A549 (cell line): ENCODE measurements at regions of chr16 and their contacts with region 1.

Region 1: GRCh38 chr16:2251483-2252240 is at the start of gene ECI1:
- DNase-seq: peak; percentile 96 to 98
- ATAC-seq: peak; percentile 83 to 88
- H3K4me3 ChIP-seq: peak within 1 kb of the TSS; percentile 91
- H3K27ac ChIP-seq: peak within 1 kb of the TSS; percentile 96 to 98
- H3K4me1 ChIP-seq: peaks cover 20% of the 10 kb centered on the region
- CTCF ChIP-seq: peak; percentile 56
- EP300 ChIP-seq: no peak
- POLR2A ChIP-seq: peak; percentile 88
- RAD21 ChIP-seq: peak; percentile 43 to 70
- polyA plus RNA-seq, gene ECI1: 41.8 and 47.9 TPM in 2 replicates

Region 2: GRCh38 chr16:1942810-1943726 is 308.6 kb before region 1 on chr16 and contains the start of gene MSRB1:
- CTCF ChIA-PET with region 1: no interaction called
- POLR2A ChIA-PET with region 1: no interaction called
- DNase-seq: peak; percentile 97 to 98
- ATAC-seq: peak; percentile 84 to 93
- H3K4me3 ChIP-seq: peak within 1 kb of the TSS; percentile 84
- H3K27ac ChIP-seq: peak within 1 kb of the TSS; percentile 79 to 92
- H3K4me1 ChIP-seq: peaks cover 19% of the 10 kb centered on the region
- CTCF ChIP-seq: no peak
- EP300 ChIP-seq: no peak
- POLR2A ChIP-seq: peak; percentile 90
- RAD21 ChIP-seq: no peak
- polyA plus RNA-seq, gene MSRB1: 27.7 and 34.4 TPM in 2 replicates

Region 3: GRCh38 chr16:2226245-2226793 is 25.3 kb before region 1 on chr16:
- CTCF ChIA-PET with region 1: interaction called, 20 read pairs
- POLR2A ChIA-PET with region 1: interaction called, 3 read pairs
- DNase-seq: no peak
- ATAC-seq: no peak
- H3K4me3 ChIP-seq: no peak overlapping the region
- H3K27ac ChIP-seq: peak overlapping the region in 1 of 2 experiments; percentile 49; a peak in 3 of 6 replicates
- H3K4me1 ChIP-seq: peaks cover 25% of the 10 kb centered on the region
- CTCF ChIP-seq: no peak
- EP300 ChIP-seq: no peak
- POLR2A ChIP-seq: no peak
- RAD21 ChIP-seq: no peak

Region 4: GRCh38 chr16:2267913-2268666 is 16.4 kb after region 1 on chr16 and contains the start of gene RNPS1:
- CTCF ChIA-PET with region 1: interaction called, 21 read pairs
- POLR2A ChIA-PET with region 1: interaction called, 15 read pairs
- DNase-seq: peak; percentile 97 to 98
- ATAC-seq: peak; percentile 85 to 94
- H3K4me3 ChIP-seq: peak within 1 kb of the TSS; percentile 89
- H3K27ac ChIP-seq: peak within 1 kb of the TSS; percentile 98
- H3K4me1 ChIP-seq: peaks cover 23% of the 10 kb centered on the region; the same call in 2 of the 3 replicates
- CTCF ChIP-seq: no peak
- EP300 ChIP-seq: no peak
- POLR2A ChIP-seq: peak; percentile 66
- RAD21 ChIP-seq: no peak
- polyA plus RNA-seq, gene RNPS1: 163 and 183 TPM in 2 replicates

Region 5: GRCh38 chr16:2295056-2295798 is 43.6 kb after region 1 on chr16:
- CTCF ChIA-PET with region 1: no interaction called
- POLR2A ChIA-PET with region 1: no interaction called
- DNase-seq: no peak
- ATAC-seq: no peak
- H3K4me3 ChIP-seq: no peak overlapping the region
- H3K27ac ChIP-seq: no peak overlapping the region
- H3K4me1 ChIP-seq: no peaks in the 10 kb centered on the region
- CTCF ChIP-seq: no peak
- EP300 ChIP-seq: no peak
- POLR2A ChIP-seq: no peak
- RAD21 ChIP-seq: no peak